ENCODE measurements at regions of chr3 and their contacts with region 1.

Region 1: DNA sequence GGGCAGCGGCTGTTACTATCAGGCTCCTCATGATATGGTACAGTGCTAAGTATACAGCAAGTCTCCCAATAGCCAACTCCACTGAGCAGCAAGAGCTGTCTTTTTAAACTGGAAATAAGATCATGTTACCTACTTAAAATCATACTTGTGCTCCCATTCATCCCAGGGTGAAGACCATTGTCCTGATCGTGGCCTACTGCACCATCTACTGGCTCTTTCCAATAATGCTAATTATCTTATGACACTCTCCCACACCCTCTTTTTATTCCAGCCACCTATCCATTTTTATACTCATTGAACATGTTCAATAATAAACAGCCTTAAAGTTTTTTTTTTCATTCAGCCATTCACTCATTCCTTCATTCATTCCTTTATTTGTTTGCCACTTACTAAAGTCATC is 117.7 kb downstream of the GBE1 start:
- DNase-seq: peak; percentile 58
- ATAC-seq: peak; percentile 85
- H3K4me3 ChIP-seq: no peak overlapping the region
- H3K27ac ChIP-seq: no peak overlapping the region
- H3K4me1 ChIP-seq: peaks cover 9% of the 10 kb centered on the region; the same call in 1 of the 2 replicates
- H3K27me3 ChIP-seq: no peaks in the 10 kb centered on the region
- CTCF ChIP-seq: peak; percentile 74

Region 2: DNA sequence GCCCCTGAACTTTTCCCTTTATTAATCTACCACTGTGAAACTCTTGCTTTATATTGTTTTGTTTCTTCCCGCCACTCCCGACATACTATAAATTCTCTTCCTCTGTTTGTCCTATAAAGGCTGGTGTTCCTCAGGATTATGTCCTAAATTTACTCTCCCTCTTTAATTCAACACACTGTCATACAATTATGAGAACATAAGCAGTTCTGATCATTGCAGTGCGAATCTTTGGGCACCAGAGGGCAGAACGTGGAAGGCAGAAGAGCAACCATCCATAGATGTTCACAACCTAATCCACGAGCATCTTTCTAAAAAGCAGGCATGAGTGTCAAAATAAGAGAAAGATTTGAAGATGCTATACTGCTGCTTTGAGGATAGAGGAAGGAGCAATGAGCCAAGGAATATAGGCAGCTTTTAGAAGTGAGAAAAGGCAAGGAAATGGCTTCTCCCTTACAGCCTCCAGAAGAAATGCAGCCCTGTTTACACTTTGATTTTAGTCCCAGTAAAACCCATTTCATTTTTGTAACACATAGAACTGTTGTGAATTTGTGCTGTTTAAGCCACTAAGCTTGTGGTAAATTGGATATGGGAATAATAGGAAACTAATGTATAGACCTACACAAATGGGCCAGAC is 61.6 kb before region 1 on chr3:
- CTCF ChIA-PET with region 1: no interaction called
- POLR2A ChIA-PET with region 1: no interaction called
- intact Hi-C with region 1: loop called (anchors 1 kb)
- DNase-seq: peak; percentile 78
- ATAC-seq: peak; percentile 94
- H3K4me3 ChIP-seq: no peak overlapping the region
- H3K27ac ChIP-seq: no peak overlapping the region
- H3K4me1 ChIP-seq: no peaks in the 10 kb centered on the region
- H3K27me3 ChIP-seq: no peaks in the 10 kb centered on the region
- CTCF ChIP-seq: peak; percentile 92